ENCODE measurements at regions of chr1 and their contacts with region 1.

Region 1: GRCh38 chr1:182084487-182085316 is 23.2 kb upstream of the ZNF648 start:
- DNase-seq: peak; percentile 89
- ATAC-seq: peak; percentile 90
- H3K4me3 Mint-ChIP-seq: no peak overlapping the region
- H3K27ac Mint-ChIP-seq: no peak overlapping the region
- H3K4me1 Mint-ChIP-seq: peaks cover 38% of the 10 kb centered on the region
- H3K27me3 Mint-ChIP-seq: no peaks in the 10 kb centered on the region

Region 2: DNA sequence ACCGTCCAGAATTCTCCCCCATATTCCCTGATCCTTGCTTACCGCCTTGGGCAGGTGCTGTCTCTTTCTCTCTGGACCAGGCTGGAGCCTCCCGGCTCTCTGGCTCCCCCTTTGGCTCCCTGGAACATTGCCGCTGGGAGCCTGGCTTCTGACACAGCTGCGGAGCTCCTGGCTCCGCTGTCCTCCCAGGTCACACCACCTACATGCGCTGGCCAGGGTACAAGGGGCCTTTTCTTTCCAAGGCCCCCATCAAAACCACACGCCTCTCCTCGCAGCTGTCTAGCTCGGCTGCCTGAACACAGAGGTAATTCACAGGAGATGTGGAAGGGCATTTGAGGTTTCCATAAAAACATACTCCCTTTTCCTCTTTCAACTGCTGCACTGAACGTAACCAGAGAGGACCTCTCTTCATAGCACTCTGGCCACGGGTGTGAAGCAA is 15.7 kb before region 1 on chr1:
- CTCF ChIA-PET with region 1: interaction called, 33 read pairs
- POLR2A ChIA-PET with region 1: no interaction called
- intact Hi-C with region 1: no loop called
- DNase-seq: peak; percentile 64
- ATAC-seq: peak; percentile 87
- H3K4me3 Mint-ChIP-seq: no peak overlapping the region
- H3K27ac Mint-ChIP-seq: no peak overlapping the region
- H3K4me1 Mint-ChIP-seq: no peaks in the 10 kb centered on the region
- H3K27me3 Mint-ChIP-seq: peaks cover 15% of the 10 kb centered on the region

Region 3: GRCh38 chr1:182391362-182392044 is 306.8 kb after region 1 on chr1 and contains the start of gene GLUL:
- CTCF ChIA-PET with region 1: interaction called, 75 read pairs
- POLR2A ChIA-PET with region 1: no interaction called
- intact Hi-C with region 1: loop called (anchors 1 kb)
- DNase-seq: peak; percentile 81
- ATAC-seq: peak; percentile 89
- H3K4me3 Mint-ChIP-seq: peak within 1 kb of the TSS; percentile 86
- H3K27ac Mint-ChIP-seq: peak within 1 kb of the TSS; percentile 80
- H3K4me1 Mint-ChIP-seq: peaks cover 20% of the 10 kb centered on the region
- H3K27me3 Mint-ChIP-seq: peaks cover 13% of the 10 kb centered on the region
- total RNA-seq, gene GLUL: 63.5 to 87.5 TPM

Region 4: DNA sequence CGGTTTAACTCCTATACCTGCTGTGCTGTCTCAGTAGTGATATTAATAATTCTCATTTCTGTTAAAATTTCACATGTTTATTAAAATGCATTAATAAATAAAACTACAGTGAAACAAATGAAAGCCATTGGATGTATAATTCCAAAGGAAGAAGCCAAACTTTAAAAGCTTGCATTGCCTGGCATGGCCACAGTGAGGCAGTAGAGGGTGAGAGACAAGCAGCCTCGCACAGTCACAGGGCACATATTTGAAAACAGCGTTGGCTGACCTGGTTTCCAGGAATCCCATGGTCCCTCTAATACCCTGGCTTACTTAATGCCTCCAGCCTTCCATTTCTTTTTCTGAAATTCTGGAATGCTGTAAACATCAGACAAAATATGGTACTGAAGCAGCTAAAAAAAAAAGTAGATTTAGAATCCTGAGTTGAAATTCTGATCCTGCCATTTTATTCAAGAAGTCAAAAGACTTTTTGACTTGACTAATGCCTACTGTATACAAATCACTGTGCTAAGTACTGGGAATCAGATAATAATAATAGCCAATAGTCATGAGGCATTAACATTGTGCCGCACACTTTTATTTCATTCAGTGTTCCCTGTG is 511.0 kb after region 1 on chr1:
- CTCF ChIA-PET with region 1: no interaction called
- POLR2A ChIA-PET with region 1: no interaction called
- intact Hi-C with region 1: loop called (anchors 2 kb)
- DNase-seq: peak; percentile 83
- ATAC-seq: peak; percentile 68
- H3K4me3 Mint-ChIP-seq: no peak overlapping the region
- H3K27ac Mint-ChIP-seq: no peak overlapping the region
- H3K4me1 Mint-ChIP-seq: peaks cover 11% of the 10 kb centered on the region
- H3K27me3 Mint-ChIP-seq: no peaks in the 10 kb centered on the region